SK-N-SH (cell line): ENCODE measurements at regions of chr10 and their contacts with region 1.

Region 1: GRCh38 chr10:91632671-91633550 is at the start of gene PPP1R3C:
- DNase-seq: peak; percentile 93
- H3K4me3 ChIP-seq: peak within 1 kb of the TSS; percentile 71 to 72
- H3K27ac ChIP-seq: peak within 1 kb of the TSS; percentile 69 to 84
- H3K4me1 ChIP-seq: peaks cover 0 to 12% of the 10 kb centered on the region in 2 experiments; a peak in 2 of 4 replicates
- H3K27me3 ChIP-seq: no peaks in the 10 kb centered on the region
- CTCF ChIP-seq: peak; percentile 55
- EP300 ChIP-seq: peak in 1 of 2 experiments; percentile 41; a peak in 2 of 4 replicates
- RAD21 ChIP-seq: peak; percentile 50
- polyA plus RNA-seq, gene PPP1R3C: 9.0 and 11.5 TPM in 2 replicates

Region 2: GRCh38 chr10:91298224-91298871 is 334.6 kb before region 1 on chr10:
- CTCF ChIA-PET with region 1: interaction called, 71 read pairs
- POLR2A ChIA-PET with region 1: no interaction called
- DNase-seq: peak; percentile 82
- H3K4me3 ChIP-seq: no peak overlapping the region
- H3K27ac ChIP-seq: no peak overlapping the region
- H3K4me1 ChIP-seq: peaks cover 9 to 18% of the 10 kb centered on the region in 2 experiments
- H3K27me3 ChIP-seq: no peaks in the 10 kb centered on the region
- CTCF ChIP-seq: peak; percentile 87
- EP300 ChIP-seq: no peak
- RAD21 ChIP-seq: peak; percentile 95

Region 3: DNA sequence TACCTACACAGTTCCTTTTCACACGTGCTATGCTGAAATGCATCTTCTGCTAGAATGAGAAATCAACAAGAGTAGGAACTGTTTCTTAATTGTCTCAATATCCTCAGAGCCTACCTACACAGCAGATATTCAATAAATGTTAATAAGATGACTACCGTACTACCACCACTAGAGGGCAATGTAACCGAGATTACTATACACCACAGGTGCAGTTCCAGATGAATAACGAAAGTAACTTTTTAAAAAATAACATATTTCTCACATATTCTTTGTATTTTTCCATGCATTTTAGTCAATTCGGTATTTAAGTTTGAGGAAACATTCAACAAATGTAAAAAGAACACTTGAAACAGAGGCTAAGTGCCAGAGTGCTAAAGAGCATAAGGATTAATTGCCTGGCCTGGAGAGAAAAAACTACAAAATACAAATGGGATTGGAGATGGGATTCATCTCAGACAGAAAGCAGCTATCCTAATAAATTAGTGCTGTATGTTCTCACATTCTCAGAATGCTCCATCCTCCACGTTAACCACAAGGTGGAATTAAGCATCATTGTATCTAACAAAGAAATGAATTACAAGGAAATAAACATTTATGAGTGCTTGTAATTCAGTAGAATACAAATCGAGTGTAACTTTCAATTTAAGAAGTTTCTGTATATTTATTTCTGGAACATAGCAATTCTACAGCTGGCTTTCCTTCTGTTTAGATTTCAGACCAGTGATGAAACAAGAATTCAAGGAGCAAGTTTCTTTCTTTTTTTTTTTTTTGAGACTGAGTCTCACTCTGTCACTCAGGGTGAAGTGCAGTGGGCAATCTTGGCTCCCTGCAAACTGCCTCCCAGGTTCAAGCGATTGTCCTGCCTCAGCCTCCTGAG is 243.0 kb before region 1 on chr10:
- CTCF ChIA-PET with region 1: interaction called, 19 read pairs
- POLR2A ChIA-PET with region 1: no interaction called
- DNase-seq: peak; percentile 31
- H3K4me3 ChIP-seq: no peak overlapping the region
- H3K27ac ChIP-seq: no peak overlapping the region
- H3K4me1 ChIP-seq: no peaks in the 10 kb centered on the region; a peak in 1 of 4 replicates
- H3K27me3 ChIP-seq: no peaks in the 10 kb centered on the region
- CTCF ChIP-seq: peak; percentile 72
- EP300 ChIP-seq: no peak
- RAD21 ChIP-seq: peak; percentile 64

Region 4: DNA sequence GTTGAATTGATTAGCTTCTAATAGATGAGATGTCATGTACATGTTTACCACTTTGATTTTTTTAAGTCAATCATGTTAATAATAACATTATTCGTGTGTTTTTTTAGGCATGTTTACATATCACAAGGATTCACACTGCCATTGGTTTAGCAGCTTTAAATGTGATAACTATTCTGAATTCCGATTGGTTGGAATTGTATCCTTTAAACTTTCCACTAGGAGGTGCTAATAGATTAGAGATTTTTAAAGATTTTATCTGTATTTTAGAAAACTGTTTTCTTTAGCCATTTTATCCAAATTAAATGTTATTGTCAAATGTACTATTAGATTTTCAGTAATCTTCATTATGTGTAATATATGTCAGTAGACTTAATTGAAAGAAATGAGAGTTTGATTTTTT is 139.6 kb before region 1 on chr10:
- CTCF ChIA-PET with region 1: interaction called, 114 read pairs
- POLR2A ChIA-PET with region 1: no interaction called
- DNase-seq: peak; percentile 53
- H3K4me3 ChIP-seq: no peak overlapping the region
- H3K27ac ChIP-seq: no peak overlapping the region
- H3K4me1 ChIP-seq: peaks cover 0 to 15% of the 10 kb centered on the region in 2 experiments; a peak in 2 of 4 replicates
- H3K27me3 ChIP-seq: no peaks in the 10 kb centered on the region
- CTCF ChIP-seq: peak; percentile 68
- EP300 ChIP-seq: no peak
- RAD21 ChIP-seq: peak; percentile 65

Region 5: DNA sequence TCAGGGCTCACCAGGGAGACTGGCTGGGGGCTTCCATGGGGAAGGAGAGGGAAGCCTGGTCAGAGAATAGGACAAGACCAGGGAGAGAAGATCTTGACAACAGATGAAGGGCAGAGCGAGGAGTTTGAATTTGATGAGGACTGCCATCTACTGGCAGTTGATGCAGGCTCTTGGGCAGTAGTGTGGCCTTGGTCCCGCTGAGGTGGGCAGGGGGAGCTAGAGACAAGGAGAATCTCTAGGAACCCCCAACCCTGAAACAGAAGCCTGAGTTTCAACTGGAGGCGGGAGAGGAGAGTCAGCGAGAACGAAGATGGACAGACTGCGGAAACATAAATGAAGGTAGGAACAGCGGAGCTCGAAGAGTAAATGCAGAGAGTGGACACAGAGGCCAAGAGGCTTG is 81.1 kb before region 1 on chr10:
- CTCF ChIA-PET with region 1: interaction called, 61 read pairs
- POLR2A ChIA-PET with region 1: interaction called, 3 read pairs
- DNase-seq: peak; percentile 55
- H3K4me3 ChIP-seq: no peak overlapping the region
- H3K27ac ChIP-seq: no peak overlapping the region
- H3K4me1 ChIP-seq: peaks cover 0 to 5% of the 10 kb centered on the region in 2 experiments; a peak in 2 of 4 replicates
- H3K27me3 ChIP-seq: no peaks in the 10 kb centered on the region
- CTCF ChIP-seq: peak; percentile 68
- EP300 ChIP-seq: no peak
- RAD21 ChIP-seq: peak; percentile 77

Region 6: GRCh38 chr10:91643700-91644099 is 10.8 kb after region 1 on chr10:
- CTCF ChIA-PET with region 1: interaction called, 20 read pairs
- POLR2A ChIA-PET with region 1: no interaction called
- DNase-seq: no peak
- H3K4me3 ChIP-seq: no peak overlapping the region
- H3K27ac ChIP-seq: no peak overlapping the region
- H3K4me1 ChIP-seq: 0 out of 4 replicates have a peak, but pooled peaks cover 0 to 4% of the 10 kb centered on the region in 2 experiments
- H3K27me3 ChIP-seq: no peaks in the 10 kb centered on the region
- CTCF ChIP-seq: peak; percentile 50
- EP300 ChIP-seq: no peak
- RAD21 ChIP-seq: peak; percentile 27; the same call in 1 of the 2 replicates

Region 7: DNA sequence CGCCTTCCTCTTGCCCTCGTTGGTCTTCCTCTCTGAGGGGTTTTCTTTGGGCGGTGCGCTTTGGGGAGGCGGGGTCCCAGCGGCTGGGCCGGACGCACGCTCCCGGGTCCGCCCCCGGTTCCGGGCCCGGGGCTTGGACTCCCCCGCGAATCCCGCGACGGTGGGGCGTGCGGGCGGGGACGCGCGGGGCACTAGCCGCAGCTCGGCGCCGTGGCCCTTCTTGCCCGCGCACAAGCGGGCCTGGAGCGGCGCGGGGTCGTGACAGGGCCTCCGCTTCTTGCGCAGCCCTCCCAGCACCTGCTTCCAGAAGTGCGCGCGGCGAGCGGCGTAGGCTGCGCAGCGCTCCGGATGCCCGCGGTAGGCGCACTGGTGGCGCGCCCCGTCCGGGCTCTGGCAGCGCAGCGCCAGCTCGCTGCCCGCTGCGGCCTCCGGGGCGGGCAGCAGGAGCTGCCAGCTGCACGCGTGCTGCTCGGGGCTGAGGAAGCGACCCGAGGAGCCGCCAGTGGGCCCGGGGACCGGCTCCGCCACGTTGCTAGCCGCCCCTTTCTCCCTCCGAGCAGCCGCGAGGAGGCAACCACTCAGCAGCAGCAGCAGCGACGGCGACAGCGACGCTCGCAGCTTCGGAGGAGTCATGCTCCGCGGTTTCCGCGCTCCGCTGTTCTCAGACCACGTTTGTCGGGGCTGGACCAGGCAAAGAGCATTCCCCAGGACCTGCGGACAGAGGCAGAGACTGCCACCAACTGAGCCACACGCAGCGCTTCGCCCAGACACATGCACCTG is 275.6 kb after region 1 on chr10:
- CTCF ChIA-PET with region 1: interaction called, 19 read pairs
- POLR2A ChIA-PET with region 1: no interaction called
- DNase-seq: peak; percentile 88
- H3K4me3 ChIP-seq: peak overlapping the region; percentile 74 to 80
- H3K27ac ChIP-seq: peak overlapping the region in 1 of 2 experiments; percentile 70; a peak in 2 of 4 replicates
- H3K4me1 ChIP-seq: peaks cover 2 to 3% of the 10 kb centered on the region in 2 experiments; a peak in 1 of 4 replicates
- H3K27me3 ChIP-seq: no peaks in the 10 kb centered on the region
- CTCF ChIP-seq: peak; percentile 48
- EP300 ChIP-seq: 0 out of 4 replicates have a peak, but pooled peaks of 1 of the 2 experiments have one; percentile 7
- RAD21 ChIP-seq: peak; percentile 44